Gastrocnemius medialis (tissue), 4 donors: ENCODE measurements at regions of chr4 and their contacts with region 1.

Region 1: DNA sequence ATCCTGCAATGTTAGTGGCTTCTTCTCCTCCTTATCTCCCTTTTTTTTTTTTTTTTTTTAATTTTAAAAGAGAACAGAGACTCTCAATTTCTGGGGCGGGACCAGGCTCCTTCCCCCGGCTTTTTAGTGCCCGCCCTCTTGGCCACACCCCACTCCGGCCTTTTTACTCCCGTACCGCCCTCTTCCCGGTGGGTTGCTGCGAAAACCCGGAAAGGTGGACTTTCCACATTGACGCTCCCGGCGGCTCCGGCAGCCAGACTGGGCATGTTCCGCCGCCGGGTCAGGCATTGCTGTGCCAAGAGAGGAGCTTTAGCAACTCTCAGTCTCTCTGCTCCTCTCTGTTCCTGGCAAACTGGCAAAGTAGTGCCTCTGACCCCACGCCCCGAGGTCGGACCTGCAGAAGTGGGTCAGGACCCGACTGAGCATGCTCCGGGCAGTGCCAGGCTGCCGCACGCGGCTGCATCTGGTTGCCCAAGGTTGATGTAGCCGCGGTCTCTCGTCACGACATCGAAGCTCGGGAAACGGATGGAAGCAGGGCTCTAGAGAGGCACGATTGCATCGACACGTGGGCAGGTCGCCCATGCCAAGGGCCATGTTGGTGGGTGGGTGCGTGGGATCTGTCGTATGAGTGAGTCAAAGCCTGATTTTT is 1.1 kb upstream of the MFAP3L start:
- DNase-seq: peak; percentile 88 to 90
- ATAC-seq: peak; percentile 88 to 90
- H3K4me3 ChIP-seq: peak overlapping the region; percentile 74 to 91 (median 88)
- H3K27ac ChIP-seq: peak overlapping the region; percentile 90 to 93 (median 92)
- H3K4me1 ChIP-seq: peaks cover 8 to 18% of the 10 kb centered on the region in 2 donors
- H3K27me3 ChIP-seq: no peaks in the 10 kb centered on the region
- CTCF ChIP-seq: peak in 2 of 5 experiments; percentile 18 to 21
- POLR2A ChIP-seq: no peak

Region 2: GRCh38 chr4:169659716-169660670 is 367.3 kb before region 1 on chr4:
- in situ Hi-C with region 1: no loop called
- intact Hi-C with region 1: loop called (anchors 5 kb)
- DNase-seq: peak; percentile 67 to 77
- ATAC-seq: peak; percentile 98 to 99
- H3K4me3 ChIP-seq: peak overlapping the region; percentile 49 to 61 (median 56)
- H3K27ac ChIP-seq: peak overlapping the region; percentile 79 to 85 (median 80)
- H3K4me1 ChIP-seq: peaks cover 35 to 55% of the 10 kb centered on the region in 2 donors
- H3K27me3 ChIP-seq: no peaks in the 10 kb centered on the region
- CTCF ChIP-seq: no peak
- POLR2A ChIP-seq: peak; percentile 14 to 42

Region 3: DNA sequence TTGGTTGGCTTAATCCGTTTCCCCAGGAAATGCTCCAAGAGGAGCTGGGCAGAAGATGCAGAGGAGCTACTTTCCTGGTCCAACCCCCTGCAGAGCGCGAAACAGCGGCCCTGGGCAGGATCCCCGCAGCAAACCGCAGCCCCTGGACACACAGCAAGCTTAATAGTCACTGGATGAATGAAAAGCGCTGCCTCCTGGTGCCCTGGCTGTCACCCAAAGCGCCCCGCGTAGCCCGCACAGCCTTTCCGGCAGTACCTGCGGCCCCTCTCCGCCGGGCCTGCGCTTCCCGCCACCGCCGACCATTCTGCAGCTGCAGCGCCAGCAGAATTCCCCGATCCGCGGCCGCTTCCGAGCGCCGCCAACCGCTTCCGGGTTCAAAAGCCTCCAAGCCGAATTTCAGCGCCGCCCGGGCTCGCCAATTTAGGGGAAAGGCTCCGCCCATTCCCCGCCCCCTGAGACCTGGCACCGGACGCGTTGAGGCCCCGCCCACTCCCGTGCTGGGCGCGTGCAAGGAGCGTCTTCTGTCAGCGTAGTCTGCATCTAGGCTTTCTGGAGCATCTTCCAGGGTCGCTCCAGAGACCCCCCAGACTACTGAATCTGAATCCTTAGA is 269.6 kb before region 1 on chr4 and contains the start of gene HPF1:
- in situ Hi-C with region 1: no loop called
- intact Hi-C with region 1: loop called (anchors 2 kb)
- DNase-seq: peak; percentile 84 to 88
- ATAC-seq: peak; percentile 96 to 97
- H3K4me3 ChIP-seq: peak within 1 kb of the TSS; percentile 78 to 100 (median 88)
- H3K27ac ChIP-seq: peak within 1 kb of the TSS; percentile 63 to 81 (median 73)
- H3K4me1 ChIP-seq: peaks cover 16 to 17% of the 10 kb centered on the region in 2 donors
- H3K27me3 ChIP-seq: no peaks in the 10 kb centered on the region
- CTCF ChIP-seq: peak in 1 of 5 experiments; percentile 15
- POLR2A ChIP-seq: peak; percentile 35 to 54
- total RNA-seq, gene HPF1: 18.4 to 51.8 (median 28.4) TPM

Region 4: DNA sequence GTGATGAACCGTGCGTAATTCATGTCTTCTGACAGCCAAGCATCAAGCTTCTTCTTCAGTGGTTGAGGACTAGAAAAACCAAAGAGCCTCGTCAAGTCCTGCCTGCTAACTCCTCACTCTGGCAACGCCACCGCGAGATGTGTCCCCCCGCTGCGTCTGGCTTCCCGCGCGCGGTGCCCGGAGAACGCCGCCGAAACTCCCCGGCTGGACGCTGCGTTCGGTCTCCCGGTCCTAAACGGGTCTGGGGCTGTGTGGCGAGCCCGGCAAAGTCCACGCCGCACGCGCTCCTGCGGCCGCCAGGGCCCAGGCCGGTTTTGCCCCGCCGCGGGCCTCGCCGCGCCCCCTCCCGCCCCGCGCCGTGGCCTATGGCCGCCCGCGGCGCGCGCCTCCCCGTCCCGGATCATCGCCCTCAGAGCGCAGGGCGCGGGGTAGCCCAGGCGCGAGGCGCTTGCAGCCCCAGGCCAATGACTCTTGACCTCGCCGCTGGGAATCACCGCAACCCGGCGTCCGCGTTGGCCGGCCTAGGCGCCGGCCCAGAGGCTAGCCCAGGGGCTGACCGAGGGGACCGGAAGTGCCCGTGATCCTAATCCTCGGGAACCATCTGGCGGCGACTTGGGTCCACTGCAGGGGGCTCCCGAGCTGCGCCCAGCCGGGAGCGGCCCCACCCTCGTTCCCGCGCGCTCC is 62.5 kb after region 1 on chr4 and contains the start of gene AADAT:
- in situ Hi-C with region 1: no loop called
- intact Hi-C with region 1: loop called (anchors 5 kb)
- DNase-seq: peak; percentile 32 to 61
- ATAC-seq: peak; percentile 86 to 90
- H3K4me3 ChIP-seq: peak within 1 kb of the TSS; percentile 46 to 66 (median 58)
- H3K27ac ChIP-seq: peak within 1 kb of the TSS in 3 of 4 donors; percentile 17 to 22 (median 17)
- H3K4me1 ChIP-seq: peaks cover 5 to 8% of the 10 kb centered on the region in 2 donors
- H3K27me3 ChIP-seq: no peaks in the 10 kb centered on the region
- CTCF ChIP-seq: peak; percentile 30 to 74 (median 66)
- POLR2A ChIP-seq: no peak
- total RNA-seq, gene AADAT: 0.33 to 1.4 (median 0.82) TPM